ENCODE measurements at regions of chr1 and their contacts with region 1.

Region 1: DNA sequence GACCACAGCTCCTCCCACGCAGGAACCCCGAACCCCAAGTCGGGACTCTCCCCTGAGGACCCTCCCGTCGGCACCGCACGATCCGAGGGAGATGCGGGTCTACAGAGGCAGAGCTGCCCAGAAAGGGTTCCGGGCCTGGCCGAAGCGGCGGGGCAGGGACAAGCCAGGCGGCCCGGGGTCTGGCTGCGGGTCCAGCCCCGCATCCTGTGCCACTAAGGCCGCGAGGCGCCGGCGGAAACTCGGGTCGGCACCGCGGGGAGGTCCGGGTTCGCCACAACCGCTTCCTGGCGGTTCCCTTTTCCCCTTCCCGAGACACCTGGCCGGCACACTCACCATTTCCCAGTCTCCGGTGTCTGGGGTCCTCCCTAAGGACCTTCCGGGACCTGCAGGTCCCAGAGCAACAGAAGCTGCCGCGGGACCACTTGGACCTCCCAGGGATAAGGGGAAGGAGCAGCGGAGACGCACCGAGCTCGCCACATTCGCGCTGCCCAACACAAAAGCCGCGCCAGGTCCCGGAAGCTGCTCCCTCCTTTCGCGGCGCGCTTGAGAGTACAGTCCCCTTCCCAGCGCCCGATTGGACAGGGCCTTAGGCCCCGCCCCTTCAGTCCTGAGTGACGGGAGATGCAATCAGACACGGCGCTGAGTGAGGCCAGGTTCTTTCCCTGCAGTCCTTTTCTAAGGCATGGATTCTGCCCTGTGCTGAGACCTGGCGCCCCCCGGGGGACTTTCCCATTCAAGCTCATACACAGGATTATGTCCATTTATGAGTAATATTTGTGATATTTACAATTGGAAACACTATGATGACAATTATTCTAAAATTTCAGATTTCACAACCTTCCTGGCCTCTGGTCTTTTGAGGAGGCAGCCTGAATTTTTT is at the start of gene ZNF670:
- DNase-seq: peak; percentile 78
- ATAC-seq: peak; percentile 98
- H3K4me3 Mint-ChIP-seq: peak within 1 kb of the TSS; percentile 95
- H3K27ac Mint-ChIP-seq: peak within 1 kb of the TSS; percentile 83
- H3K4me1 Mint-ChIP-seq: peaks cover 27% of the 10 kb centered on the region
- H3K27me3 Mint-ChIP-seq: peaks cover 4% of the 10 kb centered on the region
- CTCF ChIP-seq: no peak
- total RNA-seq, gene ZNF670: 6.1 and 6.2 TPM in 2 replicates

Region 2: GRCh38 chr1:246987083-246987690 is 91.3 kb before region 1 on chr1:
- CTCF ChIA-PET with region 1: no interaction called
- POLR2A ChIA-PET with region 1: no interaction called
- intact Hi-C with region 1: no loop called
- DNase-seq: no peak
- ATAC-seq: no peak
- H3K4me3 Mint-ChIP-seq: no peak overlapping the region
- H3K27ac Mint-ChIP-seq: no peak overlapping the region
- H3K4me1 Mint-ChIP-seq: no peaks in the 10 kb centered on the region
- H3K27me3 Mint-ChIP-seq: no peaks in the 10 kb centered on the region
- CTCF ChIP-seq: no peak

Region 3: GRCh38 chr1:247007511-247008405 is 70.7 kb before region 1 on chr1 and contains the start of gene ZNF695:
- CTCF ChIA-PET with region 1: no interaction called
- POLR2A ChIA-PET with region 1: no interaction called
- intact Hi-C with region 1: loop called (anchors 1 kb)
- DNase-seq: peak; percentile 56
- ATAC-seq: peak; percentile 100
- H3K4me3 Mint-ChIP-seq: peak within 1 kb of the TSS; percentile 92
- H3K27ac Mint-ChIP-seq: peak within 1 kb of the TSS; percentile 18
- H3K4me1 Mint-ChIP-seq: peaks cover 10% of the 10 kb centered on the region
- H3K27me3 Mint-ChIP-seq: peaks cover 14% of the 10 kb centered on the region
- CTCF ChIP-seq: no peak
- total RNA-seq, gene ZNF695: 0.07 and 0.83 TPM in 2 replicates

Region 4: GRCh38 chr1:247037483-247038320 is 40.8 kb before region 1 on chr1:
- CTCF ChIA-PET with region 1: no interaction called
- POLR2A ChIA-PET with region 1: no interaction called
- intact Hi-C with region 1: no loop called
- DNase-seq: no peak
- ATAC-seq: no peak
- H3K4me3 Mint-ChIP-seq: no peak overlapping the region
- H3K27ac Mint-ChIP-seq: no peak overlapping the region
- H3K4me1 Mint-ChIP-seq: no peaks in the 10 kb centered on the region
- H3K27me3 Mint-ChIP-seq: no peaks in the 10 kb centered on the region
- CTCF ChIP-seq: no peak

Region 5: GRCh38 chr1:247103859-247104591 is 25.5 kb after region 1 on chr1 and contains the start of gene ZNF669:
- CTCF ChIA-PET with region 1: no interaction called
- POLR2A ChIA-PET with region 1: interaction called, 9 read pairs
- intact Hi-C with region 1: loop called (anchors 1 kb)
- DNase-seq: peak; percentile 89
- ATAC-seq: peak; percentile 98
- H3K4me3 Mint-ChIP-seq: peak within 1 kb of the TSS; percentile 96
- H3K27ac Mint-ChIP-seq: peak within 1 kb of the TSS; percentile 90
- H3K4me1 Mint-ChIP-seq: peaks cover 21% of the 10 kb centered on the region
- H3K27me3 Mint-ChIP-seq: peaks cover 23% of the 10 kb centered on the region
- CTCF ChIP-seq: no peak
- total RNA-seq, gene ZNF669: 17.5 and 18.0 TPM in 2 replicates

Measured in activated B cell treated with CpG ODN at 0.5 μM for 24 hours (primary cell).